ENCODE measurements at regions of chr10 and their contacts with region 1.

Region 1: GRCh38 chr10:102894466-102895213 is 23.5 kb upstream of the CNNM2 start:
- DNase-seq: no peak
- ATAC-seq: no peak
- H3K4me3 ChIP-seq: no peak overlapping the region
- H3K27ac ChIP-seq: no peak overlapping the region
- H3K4me1 ChIP-seq: no peaks in the 10 kb centered on the region
- H3K27me3 ChIP-seq: no peaks in the 10 kb centered on the region
- CTCF ChIP-seq: no peak

Region 2: DNA sequence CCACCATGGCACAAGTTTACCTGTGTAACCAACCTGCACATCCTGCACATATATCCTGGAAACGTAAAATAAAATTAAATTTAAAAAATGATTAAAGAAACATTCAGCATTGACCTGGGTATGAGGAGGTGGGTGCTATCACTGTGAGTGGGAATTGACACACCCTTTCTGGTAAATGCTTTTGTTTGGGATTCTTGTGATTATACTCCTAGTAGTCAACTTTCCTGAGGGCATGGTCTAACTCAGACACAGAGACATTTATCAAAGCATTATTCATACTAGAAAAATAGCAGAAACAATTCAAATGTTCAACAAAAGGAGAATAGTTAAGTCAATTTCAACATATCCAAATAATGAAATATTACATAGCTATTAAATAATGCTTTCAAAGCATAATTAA is 67.6 kb after region 1 on chr10:
- CTCF ChIA-PET with region 1: no interaction called
- POLR2A ChIA-PET with region 1: interaction called, 12 read pairs
- in situ Hi-C with region 1: no loop called
- intact Hi-C with region 1: no loop called
- DNase-seq: no peak
- ATAC-seq: no peak
- H3K4me3 ChIP-seq: no peak overlapping the region
- H3K27ac ChIP-seq: no peak overlapping the region
- H3K4me1 ChIP-seq: peaks cover 6% of the 10 kb centered on the region
- H3K27me3 ChIP-seq: no peaks in the 10 kb centered on the region
- CTCF ChIP-seq: no peak

Measured in Panc1 (cell line).